ENCODE measurements at regions of chr14 and their contacts with region 1.

Region 1: DNA sequence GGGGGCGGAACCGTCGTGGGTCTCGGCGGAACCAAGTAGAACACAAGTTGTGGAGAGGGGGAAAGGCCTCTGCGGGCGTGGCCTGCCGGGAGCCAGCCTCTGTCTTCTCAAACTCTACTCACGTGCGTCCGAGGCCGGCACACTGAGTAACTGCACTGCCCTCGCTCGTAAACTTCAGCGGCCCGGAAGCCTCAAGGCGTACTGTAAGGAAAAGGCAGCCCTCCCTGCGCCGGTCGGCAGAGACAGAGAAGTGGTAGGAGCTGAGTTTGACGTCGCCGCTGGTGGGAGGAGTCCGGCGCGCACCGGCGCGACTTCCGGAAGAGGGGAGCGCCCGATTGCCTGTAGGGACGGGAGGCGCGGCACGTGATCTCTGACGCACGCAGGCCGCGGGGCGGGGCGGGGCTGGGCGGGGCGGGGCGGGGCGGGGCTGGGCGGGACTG is at the start of gene FBXO33:
- DNase-seq: peak; percentile 90

Region 2: GRCh38 chr14:39102969-39103957 is 328.9 kb before region 1 on chr14 and contains the start of gene SEC23A:
- CTCF ChIA-PET with region 1: no interaction called
- POLR2A ChIA-PET with region 1: interaction called, 26 read pairs
- DNase-seq: peak; percentile 75

Region 3: DNA sequence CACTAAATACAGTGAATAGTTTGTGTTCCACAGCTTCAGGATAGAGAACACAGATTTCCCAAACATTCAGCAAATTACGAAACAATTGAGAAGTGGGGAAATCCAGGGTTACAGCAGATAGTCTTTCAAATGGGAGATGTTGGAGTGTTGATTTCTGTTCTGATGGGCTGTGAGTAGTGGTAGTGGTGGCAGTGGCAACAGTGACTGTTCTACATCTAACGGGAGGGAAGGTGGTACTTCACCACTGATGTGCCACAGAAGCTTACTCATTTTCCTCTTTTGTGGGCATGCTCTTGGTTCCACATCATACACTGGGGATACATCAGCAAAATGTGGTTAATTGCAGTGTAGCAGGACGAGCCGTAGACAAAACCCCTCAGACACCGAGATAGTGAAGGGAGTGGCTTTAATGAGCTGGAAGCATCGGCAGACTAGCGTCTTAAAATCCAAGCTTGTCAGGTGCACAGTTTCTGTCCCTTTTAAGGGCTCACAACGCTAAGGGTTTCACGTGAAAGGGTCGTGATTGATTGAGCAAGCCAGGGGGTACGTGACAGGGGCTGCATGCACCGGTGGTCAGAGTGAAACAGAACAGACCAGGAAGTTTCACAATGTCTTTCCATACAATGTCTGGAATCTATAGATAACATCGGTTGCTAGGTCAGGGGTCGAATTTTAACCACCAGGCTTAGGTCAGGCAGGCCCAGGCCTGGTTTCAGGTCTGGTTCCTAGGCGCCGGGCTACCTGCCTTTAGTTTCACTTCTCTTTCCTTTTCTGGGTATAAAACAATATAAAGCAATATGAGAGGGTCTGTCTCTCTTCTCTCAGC is 330.6 kb after region 1 on chr14:
- CTCF ChIA-PET with region 1: no interaction called
- POLR2A ChIA-PET with region 1: no interaction called
- DNase-seq: no peak